ENCODE measurements at regions of chr5 and their contacts with region 1.

Region 1: GRCh38 chr5:36151434-36152323 is at the starts of genes LMBRD2 and SKP2:
- DNase-seq: peak; percentile 97
- H3K4me3 ChIP-seq: peak within 1 kb of the TSS; percentile 84 to 91 (median 91)
- H3K27ac ChIP-seq: peak within 1 kb of the TSS; percentile 52
- H3K4me1 ChIP-seq: peaks cover 25% of the 10 kb centered on the region
- H3K27me3 ChIP-seq: no peaks in the 10 kb centered on the region
- CTCF ChIP-seq: no peak
- total RNA-seq, gene LMBRD2: 8.8 to 20.5 TPM
- total RNA-seq, gene SKP2: 39.3 to 53.3 TPM

Region 2: DNA sequence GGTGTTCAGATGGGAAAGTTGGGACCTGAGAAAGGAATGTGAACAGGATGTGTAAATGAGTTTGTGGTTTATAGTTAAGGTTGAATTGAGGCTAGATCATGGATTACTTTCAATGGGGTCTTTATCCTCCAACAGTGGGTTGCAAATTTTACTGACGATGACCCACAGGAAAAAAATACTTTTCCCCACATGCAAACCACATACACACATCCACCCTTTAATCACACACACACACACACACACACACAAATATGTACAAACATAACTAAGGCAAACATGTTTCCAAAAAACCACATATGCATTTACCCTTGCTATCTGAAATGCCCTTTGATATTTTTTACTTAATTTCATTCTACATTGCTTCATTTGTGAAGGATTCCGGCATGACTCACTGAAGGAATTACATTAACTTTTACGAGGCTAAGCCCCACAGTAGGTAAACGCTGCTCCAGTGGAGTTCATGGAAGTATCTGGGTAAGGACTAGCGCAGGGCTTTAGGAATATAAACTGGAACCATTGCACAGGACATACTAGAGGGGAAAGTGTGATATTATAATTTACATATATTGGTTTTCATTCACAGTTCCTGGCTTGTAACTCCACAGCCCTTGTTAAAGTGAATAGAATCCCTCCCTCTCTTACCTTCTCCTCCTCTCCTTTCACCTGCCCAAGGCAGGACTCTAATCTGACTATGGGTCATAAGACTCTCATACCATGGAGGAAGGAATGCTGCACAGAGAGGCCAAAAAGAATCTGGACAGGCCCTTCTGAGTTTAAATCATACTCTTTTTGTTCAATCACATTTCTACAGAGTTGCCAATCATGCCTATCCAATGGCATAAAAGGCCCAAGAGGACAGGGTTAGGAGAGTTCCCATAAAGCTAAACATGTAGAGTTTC is 542.5 kb before region 1 on chr5:
- CTCF ChIA-PET with region 1: no interaction called
- dilution Hi-C with region 1: no loop called
- in situ Hi-C with region 1: no loop called
- intact Hi-C with region 1: no loop called
- DNase-seq: peak; percentile 32
- H3K4me3 ChIP-seq: no peak overlapping the region
- H3K27ac ChIP-seq: no peak overlapping the region
- H3K4me1 ChIP-seq: peaks cover 12% of the 10 kb centered on the region
- H3K27me3 ChIP-seq: no peaks in the 10 kb centered on the region
- CTCF ChIP-seq: no peak

Region 3: GRCh38 chr5:36070687-36071571 is 80.8 kb before region 1 on chr5:
- CTCF ChIA-PET with region 1: no interaction called
- dilution Hi-C with region 1: no loop called
- in situ Hi-C with region 1: no loop called
- intact Hi-C with region 1: no loop called
- DNase-seq: no peak
- H3K4me3 ChIP-seq: peak overlapping the region; percentile 23 to 37 (median 33)
- H3K27ac ChIP-seq: no peak overlapping the region
- H3K4me1 ChIP-seq: no peaks in the 10 kb centered on the region
- H3K27me3 ChIP-seq: peaks cover 4% of the 10 kb centered on the region
- CTCF ChIP-seq: no peak

Region 4: GRCh38 chr5:36089989-36090564 is 61.6 kb before region 1 on chr5:
- CTCF ChIA-PET with region 1: no interaction called
- dilution Hi-C with region 1: no loop called
- in situ Hi-C with region 1: no loop called
- intact Hi-C with region 1: loop called (anchors 10 kb)
- DNase-seq: peak; percentile 21
- H3K4me3 ChIP-seq: no peak overlapping the region
- H3K27ac ChIP-seq: no peak overlapping the region
- H3K4me1 ChIP-seq: no peaks in the 10 kb centered on the region
- H3K27me3 ChIP-seq: no peaks in the 10 kb centered on the region
- CTCF ChIP-seq: peak; percentile 21 to 48

Region 5: GRCh38 chr5:36177715-36178523 is 26.2 kb after region 1 on chr5:
- CTCF ChIA-PET with region 1: no interaction called
- dilution Hi-C with region 1: no loop called
- in situ Hi-C with region 1: no loop called
- intact Hi-C with region 1: no loop called
- DNase-seq: peak; percentile 18
- H3K4me3 ChIP-seq: no peak overlapping the region
- H3K27ac ChIP-seq: no peak overlapping the region
- H3K4me1 ChIP-seq: no peaks in the 10 kb centered on the region
- H3K27me3 ChIP-seq: no peaks in the 10 kb centered on the region
- CTCF ChIP-seq: peak; percentile 62 to 65

Region 6: DNA sequence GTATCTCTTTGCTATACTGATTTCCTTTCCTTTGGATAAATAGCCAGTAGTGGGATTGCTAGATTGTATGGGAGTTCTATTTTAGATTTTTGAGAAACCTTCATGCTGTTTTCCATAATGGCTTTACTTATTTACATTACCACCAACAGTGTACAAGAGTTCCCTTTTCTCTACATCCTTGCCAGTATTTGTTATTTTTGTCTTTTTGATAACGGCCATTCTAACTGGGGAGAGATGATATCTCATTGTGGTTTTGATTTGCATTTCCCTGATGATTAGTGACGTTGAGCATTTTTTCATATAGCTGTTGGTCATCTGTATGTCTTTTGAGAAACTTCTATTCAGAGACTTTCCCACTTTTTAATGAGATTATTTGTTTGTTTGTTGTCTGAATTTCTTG is 64.2 kb after region 1 on chr5:
- CTCF ChIA-PET with region 1: no interaction called
- dilution Hi-C with region 1: loop called (anchors 5 kb)
- in situ Hi-C with region 1: no loop called
- intact Hi-C with region 1: no loop called
- DNase-seq: no peak
- H3K4me3 ChIP-seq: no peak overlapping the region
- H3K27ac ChIP-seq: no peak overlapping the region
- H3K4me1 ChIP-seq: no peaks in the 10 kb centered on the region
- H3K27me3 ChIP-seq: no peaks in the 10 kb centered on the region
- CTCF ChIP-seq: no peak

Region 7: DNA sequence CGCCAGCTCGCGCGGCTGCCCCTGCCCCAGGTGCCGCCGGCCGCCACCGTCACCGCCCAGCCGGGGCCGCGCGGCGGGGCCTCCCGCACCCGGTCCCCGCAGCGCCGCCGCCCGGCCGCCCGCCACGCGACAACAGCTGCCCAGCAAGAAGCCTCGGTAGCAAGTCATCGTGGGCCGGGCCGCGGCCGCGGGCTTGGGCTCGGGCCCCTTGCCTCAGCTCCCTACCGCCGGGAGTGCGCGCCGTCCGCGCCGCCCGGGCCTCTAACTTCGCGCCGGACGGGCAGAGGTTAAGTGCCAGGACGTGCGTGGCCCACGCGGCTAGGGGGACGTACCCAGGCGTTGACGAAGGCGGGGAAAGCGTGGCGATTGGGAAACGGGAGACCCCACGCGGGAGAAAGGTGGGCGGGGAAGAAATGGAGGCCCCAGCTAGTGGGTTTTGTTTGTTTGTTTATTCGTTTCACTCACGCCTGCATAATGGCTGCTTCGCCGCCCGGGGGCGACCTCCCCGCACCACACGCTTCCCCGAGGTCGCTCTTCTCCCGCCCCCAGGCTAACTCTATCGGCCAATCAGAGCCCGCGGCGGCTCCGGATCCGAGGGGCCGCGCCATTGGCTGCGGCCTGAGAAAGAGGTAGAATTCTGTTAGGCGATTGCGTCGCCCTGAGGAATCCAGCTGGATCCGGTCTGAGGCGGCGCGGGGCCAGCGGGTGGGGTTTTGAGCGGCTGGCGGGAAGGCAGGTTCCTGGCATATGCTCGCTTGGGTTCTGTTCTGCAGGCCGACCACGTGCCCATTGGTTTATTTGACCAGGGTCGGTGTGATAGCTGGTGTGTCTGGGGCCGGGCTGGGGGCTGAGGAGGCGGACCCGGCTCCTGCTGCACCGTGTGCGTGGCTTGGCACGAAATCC is 90.2 kb after region 1 on chr5 and contains the start of gene NADK2:
- CTCF ChIA-PET with region 1: no interaction called
- dilution Hi-C with region 1: no loop called
- in situ Hi-C with region 1: no loop called
- intact Hi-C with region 1: loop called (anchors 1 kb)
- DNase-seq: peak; percentile 92
- H3K4me3 ChIP-seq: peak within 1 kb of the TSS; percentile 86 to 88 (median 86)
- H3K27ac ChIP-seq: peak within 1 kb of the TSS; percentile 82
- H3K4me1 ChIP-seq: peaks cover 18% of the 10 kb centered on the region
- H3K27me3 ChIP-seq: no peaks in the 10 kb centered on the region
- CTCF ChIP-seq: peak; percentile 23 to 52
- total RNA-seq, gene NADK2: 18.5 to 21.1 TPM

Region 8: GRCh38 chr5:36882250-36882649 is 730.6 kb after region 1 on chr5:
- CTCF ChIA-PET with region 1: no interaction called
- dilution Hi-C with region 1: no loop called
- in situ Hi-C with region 1: no loop called
- intact Hi-C with region 1: loop called (anchors 5 kb)
- DNase-seq: no peak
- H3K4me3 ChIP-seq: no peak overlapping the region
- H3K27ac ChIP-seq: no peak overlapping the region
- H3K4me1 ChIP-seq: peaks cover 8% of the 10 kb centered on the region
- H3K27me3 ChIP-seq: no peaks in the 10 kb centered on the region
- CTCF ChIP-seq: no peak